ENCODE measurements at regions of chr6 and their contacts with region 1.

Region 1: GRCh38 chr6:71722393-71723135 is 163.8 kb upstream of the RIMS1 start:
- DNase-seq: no peak
- H3K4me3 ChIP-seq: no peak overlapping the region
- H3K27me3 ChIP-seq: no peaks in the 10 kb centered on the region
- CTCF ChIP-seq: no peak

Region 2: DNA sequence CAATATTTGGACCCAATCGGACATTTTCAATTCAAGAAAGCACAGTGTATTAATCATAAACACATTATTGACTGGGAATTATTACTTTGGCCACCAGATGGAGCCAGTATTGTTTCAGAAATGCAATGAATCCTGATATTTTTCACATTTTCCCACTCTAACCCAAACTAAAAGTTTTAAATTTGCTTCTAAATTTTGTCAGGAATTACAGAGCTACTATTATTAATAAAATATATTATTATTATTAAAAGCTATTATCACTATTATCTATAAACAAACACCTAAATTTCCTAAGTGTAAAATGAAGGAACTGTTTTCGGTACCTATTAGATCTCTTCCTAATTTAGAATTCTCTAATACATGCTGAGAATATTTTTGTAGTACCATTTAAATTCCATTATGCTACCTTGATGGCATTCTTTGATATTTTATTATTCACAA is 188.6 kb before region 1 on chr6:
- CTCF ChIA-PET with region 1: no interaction called
- POLR2A ChIA-PET with region 1: no interaction called
- DNase-seq: no peak
- H3K4me3 ChIP-seq: no peak overlapping the region
- H3K27me3 ChIP-seq: no peaks in the 10 kb centered on the region
- CTCF ChIP-seq: peak; percentile 60

Region 3: GRCh38 chr6:71900642-71901041 is 178.1 kb after region 1 on chr6:
- CTCF ChIA-PET with region 1: no interaction called
- POLR2A ChIA-PET with region 1: interaction called, 10 read pairs
- DNase-seq: no peak
- H3K4me3 ChIP-seq: no peak overlapping the region
- H3K27me3 ChIP-seq: no peaks in the 10 kb centered on the region
- CTCF ChIP-seq: no peak